ENCODE measurements at regions of chr7 and their contacts with region 1.

Region 1: DNA sequence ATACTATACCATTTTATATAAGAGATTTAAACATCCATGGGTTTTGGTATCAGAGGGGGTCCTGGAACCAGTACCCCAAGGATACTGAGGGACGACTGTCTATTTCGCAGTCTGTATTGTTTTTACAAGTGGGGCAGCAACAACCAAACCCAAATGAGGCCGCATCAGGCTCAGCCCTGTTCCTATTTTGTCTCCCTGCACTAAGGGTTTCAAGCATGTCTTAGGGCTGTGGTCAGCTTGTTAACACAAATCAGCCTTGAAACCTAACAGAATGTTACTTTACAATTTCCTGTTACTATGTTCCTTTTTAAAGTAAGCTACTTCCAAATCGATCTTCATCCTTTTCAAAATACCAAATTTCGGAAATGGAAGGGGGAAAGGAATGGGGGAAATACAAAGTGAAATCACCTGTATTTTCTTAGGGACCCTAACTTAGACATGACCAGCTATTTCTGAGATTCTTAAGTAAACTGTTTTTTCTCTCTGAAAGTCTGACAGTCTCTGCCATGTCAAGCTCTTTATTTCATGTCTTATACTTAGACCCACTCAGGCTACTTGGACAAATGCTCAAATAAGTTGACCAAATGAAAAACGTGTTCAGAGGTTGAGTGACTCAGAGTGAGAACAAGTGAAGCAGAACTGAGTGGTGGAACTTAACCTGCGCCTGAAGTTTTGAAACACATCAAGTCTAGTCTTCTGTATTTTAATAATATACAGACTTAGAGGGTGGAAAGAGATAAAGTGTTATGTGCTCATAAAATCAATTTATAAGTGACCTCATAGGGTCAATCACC is 75.8 kb downstream of the C1GALT1 start:
- DNase-seq: no peak
- H3K4me3 Mint-ChIP-seq: peak overlapping the region; percentile 70
- H3K27ac Mint-ChIP-seq: peak overlapping the region; percentile 86
- H3K4me1 Mint-ChIP-seq: peaks cover 48% of the 10 kb centered on the region
- H3K27me3 Mint-ChIP-seq: no peaks in the 10 kb centered on the region

Region 2: DNA sequence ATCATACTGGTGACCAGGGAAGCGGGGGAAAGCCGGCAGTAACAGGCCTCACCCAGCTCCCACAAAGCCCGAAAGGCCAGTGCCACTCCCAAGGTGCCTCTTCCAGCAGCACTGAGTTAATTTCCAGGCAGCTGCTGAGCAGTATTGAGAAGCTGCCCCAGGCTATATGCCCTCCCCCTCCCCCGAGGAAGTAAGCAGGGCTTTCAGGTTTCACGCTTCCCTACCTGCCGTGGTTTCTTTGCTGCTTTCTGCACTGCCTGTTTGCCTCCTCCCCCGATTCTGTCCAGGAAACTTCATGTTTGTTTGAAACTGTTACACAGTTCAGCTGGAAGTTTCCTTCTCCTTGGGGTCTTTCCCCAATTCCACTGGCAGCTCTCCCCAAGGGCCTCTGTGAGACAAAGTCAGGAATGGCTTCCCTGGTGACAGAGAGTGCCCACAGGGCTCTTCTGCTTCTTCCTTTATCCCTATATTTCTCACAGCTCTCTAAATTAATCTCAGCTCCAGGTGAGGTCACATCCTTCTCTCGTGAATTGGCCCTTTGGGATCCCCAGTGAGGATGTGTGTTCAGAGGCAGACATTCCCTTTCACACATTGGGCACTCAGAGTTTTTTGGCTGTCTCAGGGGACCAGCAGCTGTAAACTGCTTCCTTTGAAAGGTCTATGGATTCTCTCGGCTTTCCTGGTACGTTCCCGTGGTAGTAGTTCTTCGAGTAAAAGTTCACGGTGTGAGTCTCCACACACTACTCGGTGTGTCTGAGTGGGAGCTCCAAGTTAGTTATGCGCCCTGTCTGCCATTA is 56.3 kb before region 1 on chr7:
- intact Hi-C with region 1: loop called (anchors 5 kb)
- DNase-seq: peak; percentile 25
- H3K4me3 Mint-ChIP-seq: peak overlapping the region; percentile 51
- H3K27ac Mint-ChIP-seq: peak overlapping the region; percentile 63
- H3K4me1 Mint-ChIP-seq: peaks cover 64% of the 10 kb centered on the region
- H3K27me3 Mint-ChIP-seq: no peaks in the 10 kb centered on the region

Region 3: GRCh38 chr7:7219216-7219615 is 38.9 kb before region 1 on chr7:
- intact Hi-C with region 1: loop called (anchors 5 kb)
- DNase-seq: no peak
- H3K4me3 Mint-ChIP-seq: no peak overlapping the region
- H3K27ac Mint-ChIP-seq: no peak overlapping the region
- H3K4me1 Mint-ChIP-seq: peaks cover 21% of the 10 kb centered on the region
- H3K27me3 Mint-ChIP-seq: no peaks in the 10 kb centered on the region

Measured in activated T-helper 2 cell treated with anti-CD3 and anti-CD28 coated beads, Interferon-gamma antibody, Interleukin-2, Interleukin-4, amounts not matched to agents 10 μg/mL and 5 μg/mL and 100 μg/mL, durations not matched to agents 14 hours and 24 hours and 36 hours (primary cell).